ENCODE measurements at regions of chr13 and their contacts with region 1.

Region 1: GRCh38 chr13:38349390-38350113 is at the start of gene UFM1:
- DNase-seq: peak; percentile 90 to 94 (median 92)
- H3K4me3 ChIP-seq: peak within 1 kb of the TSS; percentile 75 to 87
- H3K4me3 Mint-ChIP-seq: peak within 1 kb of the TSS; percentile 95 to 99 (median 98)
- H3K27ac ChIP-seq: peak within 1 kb of the TSS; percentile 90
- H3K27ac Mint-ChIP-seq: peak within 1 kb of the TSS; percentile 97 to 99 (median 98)
- H3K4me1 ChIP-seq: peaks cover 31% of the 10 kb centered on the region
- H3K4me1 Mint-ChIP-seq: peaks cover 26 to 42% (median 35%) of the 10 kb centered on the region in 4 donors
- H3K27me3 ChIP-seq: no peaks in the 10 kb centered on the region
- H3K27me3 Mint-ChIP-seq: peaks cover 0 to 2% of the 10 kb centered on the region in 2 donors
- total RNA-seq, gene UFM1: 81.8 to 82.1 TPM

Region 2: DNA sequence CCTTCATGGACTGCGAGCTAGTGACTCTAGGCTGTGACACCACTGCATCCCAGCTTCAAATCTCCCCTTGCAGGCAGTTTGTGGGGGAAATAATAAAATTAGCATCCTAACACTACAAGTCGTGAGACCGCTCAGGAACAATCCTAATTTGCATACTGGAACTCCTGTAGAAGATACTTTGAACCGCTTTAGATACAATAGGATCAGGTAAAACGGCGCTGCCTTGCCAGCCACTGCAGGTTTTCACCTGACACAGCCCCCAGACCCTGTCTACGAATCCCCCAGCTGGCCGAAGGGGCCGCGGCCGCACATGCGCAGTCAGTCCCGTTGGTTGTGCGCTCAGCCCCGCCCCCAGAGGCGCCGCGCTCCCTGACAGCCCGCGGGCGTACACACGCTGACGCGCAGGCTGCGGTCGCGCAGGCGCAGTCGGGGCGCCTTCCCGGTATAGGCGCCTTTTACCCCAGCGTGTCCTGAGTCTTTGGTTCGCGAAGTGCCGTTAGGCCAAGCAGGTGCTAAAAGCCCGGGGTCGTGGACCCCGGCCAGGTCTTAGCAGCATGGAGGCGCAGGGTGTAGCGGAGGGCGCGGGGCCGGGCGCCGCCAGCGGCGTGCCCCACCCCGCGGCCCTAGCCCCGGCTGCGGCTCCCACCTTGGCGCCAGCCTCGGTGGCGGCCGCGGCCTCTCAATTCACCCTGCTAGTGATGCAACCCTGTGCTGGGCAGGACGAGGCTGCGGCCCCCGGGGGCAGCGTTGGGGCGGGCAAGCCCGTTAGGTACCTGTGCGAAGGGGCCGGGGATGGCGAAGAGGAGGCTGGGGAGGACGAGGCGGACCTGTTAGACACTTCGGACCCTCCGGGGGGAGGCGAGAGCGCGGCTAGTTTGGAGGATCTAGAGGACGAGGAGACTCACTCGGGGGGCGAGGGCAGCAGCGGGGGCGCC is 1530.5 kb before region 1 on chr13 and contains the start of gene RFXAP:
- CTCF ChIA-PET with region 1: no interaction called
- POLR2A ChIA-PET with region 1: no interaction called
- intact Hi-C with region 1: loop called (anchors 1 kb)
- DNase-seq: peak; percentile 87 to 92 (median 90)
- H3K4me3 ChIP-seq: peak within 1 kb of the TSS; percentile 76 to 86
- H3K4me3 Mint-ChIP-seq: peak within 1 kb of the TSS; percentile 91 to 97 (median 95)
- H3K27ac ChIP-seq: peak within 1 kb of the TSS; percentile 85
- H3K27ac Mint-ChIP-seq: peak within 1 kb of the TSS; percentile 85 to 96 (median 95)
- H3K4me1 ChIP-seq: peaks cover 46% of the 10 kb centered on the region
- H3K4me1 Mint-ChIP-seq: peaks cover 33 to 56% (median 42%) of the 10 kb centered on the region in 4 donors
- H3K27me3 ChIP-seq: no peaks in the 10 kb centered on the region
- H3K27me3 Mint-ChIP-seq: peaks cover 0 to 8% of the 10 kb centered on the region in 2 donors
- total RNA-seq, gene RFXAP: 8.8 to 9.9 TPM

Region 3: DNA sequence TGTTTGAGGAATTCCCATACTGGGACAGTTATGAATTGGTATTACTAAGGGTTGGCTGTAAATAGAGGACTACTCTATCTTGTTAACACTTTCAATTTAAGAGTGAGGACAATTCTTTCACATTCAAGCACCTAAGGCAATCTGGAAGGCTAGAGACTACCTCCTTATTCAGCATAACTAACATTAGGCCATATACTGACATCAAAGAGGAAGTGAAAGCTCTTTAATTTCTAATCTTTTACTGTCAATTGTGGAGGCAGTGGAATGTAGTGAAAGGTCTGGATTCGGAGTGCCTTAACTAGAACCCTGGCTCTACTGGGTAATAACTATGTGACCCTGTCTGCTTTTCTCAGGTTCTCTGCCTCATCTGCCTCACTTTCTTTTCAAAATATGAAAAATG is 134.1 kb after region 1 on chr13:
- CTCF ChIA-PET with region 1: no interaction called
- POLR2A ChIA-PET with region 1: no interaction called
- intact Hi-C with region 1: no loop called
- DNase-seq: no peak
- H3K4me3 ChIP-seq: no peak overlapping the region
- H3K4me3 Mint-ChIP-seq: no peak overlapping the region
- H3K27ac ChIP-seq: no peak overlapping the region
- H3K27ac Mint-ChIP-seq: no peak overlapping the region
- H3K4me1 ChIP-seq: no peaks in the 10 kb centered on the region
- H3K4me1 Mint-ChIP-seq: no peaks in the 10 kb centered on the region
- H3K27me3 ChIP-seq: no peaks in the 10 kb centered on the region
- H3K27me3 Mint-ChIP-seq: no peaks in the 10 kb centered on the region